WTC11 (cell line): ENCODE measurements at regions of chr3 and their contacts with region 1.

Region 1: DNA sequence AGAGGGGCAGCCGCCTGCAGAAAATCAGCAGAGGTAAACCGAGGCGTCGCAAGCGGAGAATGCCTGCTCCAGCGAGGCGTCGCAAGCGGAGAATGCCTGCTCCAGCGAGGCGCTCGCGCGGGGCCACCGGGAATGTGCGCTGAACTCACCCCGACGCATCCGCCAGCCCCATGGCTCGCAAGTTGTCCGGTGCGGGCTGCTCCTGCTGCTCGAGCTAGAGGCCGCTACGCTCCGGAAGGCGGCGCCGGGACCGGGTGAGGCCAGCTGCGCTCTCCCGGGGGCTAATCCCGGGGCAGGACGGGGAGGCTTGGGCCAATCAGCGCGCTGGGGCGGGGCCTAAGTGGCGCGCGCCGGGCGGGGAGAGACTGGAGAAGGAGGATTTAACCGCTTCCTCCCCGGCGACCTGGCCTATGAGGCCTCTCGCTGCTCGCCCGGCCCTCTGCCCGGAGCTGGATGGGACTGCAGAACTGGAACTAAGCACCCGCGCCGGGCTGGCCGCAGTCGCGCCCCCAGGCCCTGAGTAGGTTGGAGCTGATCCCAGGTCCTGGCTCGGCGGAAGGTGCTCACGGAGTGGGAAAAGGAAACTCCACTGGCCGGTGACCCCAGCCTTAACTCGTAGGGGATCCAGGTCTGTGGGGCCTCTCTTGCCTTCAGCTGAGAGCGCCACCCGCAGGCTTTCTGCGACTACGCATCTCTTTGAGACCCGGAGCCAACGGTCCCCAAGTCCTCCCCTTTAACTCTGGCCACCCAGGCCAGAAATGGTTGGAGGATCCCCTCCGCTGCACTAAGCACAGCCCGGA is at the start of gene SLC26A6:
- DNase-seq: peak; percentile 99
- ATAC-seq: peak; percentile 91
- H3K4me3 Mint-ChIP-seq: peak within 1 kb of the TSS; percentile 84
- H3K27ac Mint-ChIP-seq: peak within 1 kb of the TSS; percentile 94
- H3K4me1 Mint-ChIP-seq: peaks cover 32% of the 10 kb centered on the region
- H3K27me3 Mint-ChIP-seq: no peaks in the 10 kb centered on the region
- CTCF ChIP-seq: peak; percentile 62
- total RNA-seq, gene SLC26A6: 57.2 to 58.9 TPM (median 57.8 TPM) in 3 replicates

Region 2: GRCh38 chr3:48472915-48473616 is 162.4 kb before region 1 on chr3:
- CTCF ChIA-PET with region 1: interaction called, 17 read pairs
- POLR2A ChIA-PET with region 1: interaction called, 4 read pairs
- DNase-seq: peak; percentile 96
- ATAC-seq: peak; percentile 82
- H3K4me3 Mint-ChIP-seq: peak overlapping the region; percentile 91
- H3K27ac Mint-ChIP-seq: peak overlapping the region; percentile 99
- H3K4me1 Mint-ChIP-seq: peaks cover 30% of the 10 kb centered on the region
- H3K27me3 Mint-ChIP-seq: no peaks in the 10 kb centered on the region; the same call in none of the 2 replicates
- CTCF ChIP-seq: peak; percentile 45; the same call in 1 of the 2 replicates

Region 3: GRCh38 chr3:48556793-48557626 is 78.4 kb before region 1 on chr3 and contains the start of gene PFKFB4:
- CTCF ChIA-PET with region 1: interaction called, 39 read pairs
- POLR2A ChIA-PET with region 1: interaction called, 7 read pairs
- DNase-seq: peak; percentile 99
- ATAC-seq: peak; percentile 82
- H3K4me3 Mint-ChIP-seq: peak within 1 kb of the TSS; percentile 86
- H3K27ac Mint-ChIP-seq: peak within 1 kb of the TSS; percentile 95
- H3K4me1 Mint-ChIP-seq: peaks cover 67% of the 10 kb centered on the region
- H3K27me3 Mint-ChIP-seq: no peaks in the 10 kb centered on the region
- CTCF ChIP-seq: no peak
- total RNA-seq, gene PFKFB4: 18.0 to 26.8 TPM (median 26.7 TPM) in 3 replicates

Region 4: DNA sequence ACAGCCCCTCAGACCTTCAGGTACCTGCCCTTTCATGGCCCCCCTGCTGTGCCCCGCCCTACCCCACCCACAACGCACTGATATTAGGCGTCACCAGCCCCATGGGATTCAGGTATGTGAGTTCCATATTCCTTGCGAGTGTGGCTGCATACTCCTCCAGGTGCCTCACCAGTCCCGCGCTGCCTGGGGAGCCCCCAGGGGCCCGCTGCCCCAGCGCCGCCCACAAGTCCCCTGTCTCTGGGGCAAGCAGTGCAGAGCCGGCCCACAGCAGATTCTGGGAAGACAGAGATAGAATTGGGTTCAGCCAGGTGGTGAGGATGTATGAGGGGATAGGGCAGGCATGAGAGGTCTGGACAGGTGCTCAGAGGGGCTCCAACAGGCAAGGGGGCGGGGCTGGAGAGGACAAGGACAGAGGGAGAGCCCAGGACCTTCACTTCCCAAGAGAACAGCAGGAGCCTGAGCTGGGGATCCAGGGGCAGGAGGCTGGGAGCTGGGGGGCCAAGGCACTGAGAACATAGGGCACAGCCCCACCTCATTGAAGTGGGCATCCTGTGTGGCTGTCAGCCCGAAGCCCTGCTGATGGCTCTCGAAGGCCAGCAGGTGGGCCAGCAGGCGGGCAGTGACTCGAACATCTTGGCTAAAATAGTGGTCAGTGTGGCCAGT is 12.9 kb after region 1 on chr3:
- CTCF ChIA-PET with region 1: interaction called, 10 read pairs
- POLR2A ChIA-PET with region 1: no interaction called
- DNase-seq: no peak
- ATAC-seq: no peak
- H3K4me3 Mint-ChIP-seq: no peak overlapping the region
- H3K27ac Mint-ChIP-seq: no peak overlapping the region
- H3K4me1 Mint-ChIP-seq: no peaks in the 10 kb centered on the region
- H3K27me3 Mint-ChIP-seq: no peaks in the 10 kb centered on the region
- CTCF ChIP-seq: no peak

Region 5: DNA sequence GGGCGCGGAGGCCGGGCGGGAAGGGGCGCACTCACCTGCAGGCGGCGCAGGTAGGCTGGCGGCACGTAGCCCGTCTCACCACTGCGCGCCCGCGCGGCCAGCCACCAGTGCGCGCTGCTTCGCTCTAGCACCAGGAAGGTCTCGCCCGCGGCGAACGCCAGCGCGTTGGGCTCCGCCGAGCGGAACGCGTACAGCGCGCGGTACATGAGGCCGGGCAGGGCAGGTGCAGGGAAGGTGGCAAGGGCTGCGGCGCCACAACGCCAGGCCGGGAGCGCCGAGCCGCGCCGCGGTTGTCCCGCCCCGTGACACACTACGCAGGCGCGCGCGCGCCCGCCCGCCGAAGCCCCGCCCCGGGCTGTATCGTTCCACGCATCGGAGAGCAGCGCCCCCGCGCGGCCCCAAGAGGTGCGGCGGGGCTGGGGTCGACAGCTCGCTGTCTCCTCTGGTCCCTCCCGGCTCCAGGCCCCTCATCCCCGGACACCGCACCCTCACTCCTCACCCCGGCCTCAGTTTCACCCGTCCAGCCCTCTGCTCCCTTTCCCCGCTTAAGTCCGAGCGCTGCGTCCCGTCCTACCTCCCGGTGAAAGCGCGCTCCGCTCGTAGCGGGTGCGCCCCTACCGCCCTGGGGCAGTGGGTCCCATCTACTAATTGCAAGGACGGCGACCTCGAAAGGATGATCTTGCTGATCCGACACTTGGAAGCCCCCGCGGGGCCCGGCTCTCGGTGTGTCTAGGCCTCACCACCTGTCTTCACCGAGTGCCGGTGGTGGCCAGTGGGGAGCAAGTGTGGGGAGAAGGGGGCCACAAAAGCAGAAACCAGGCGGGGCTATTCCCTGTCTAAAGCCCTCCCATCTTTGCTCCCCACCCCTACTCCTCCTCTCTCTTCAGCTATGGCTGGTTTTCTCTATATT is 50.4 kb after region 1 on chr3 and contains the start of gene NCKIPSD:
- CTCF ChIA-PET with region 1: interaction called, 23 read pairs
- POLR2A ChIA-PET with region 1: no interaction called
- DNase-seq: peak; percentile 91
- ATAC-seq: peak; percentile 88
- H3K4me3 Mint-ChIP-seq: peak within 1 kb of the TSS; percentile 89
- H3K27ac Mint-ChIP-seq: peak within 1 kb of the TSS; percentile 27
- H3K4me1 Mint-ChIP-seq: peaks cover 16% of the 10 kb centered on the region
- H3K27me3 Mint-ChIP-seq: no peaks in the 10 kb centered on the region
- CTCF ChIP-seq: peak; percentile 82
- total RNA-seq, gene NCKIPSD: 40.1 to 50.1 TPM (median 47.1 TPM) in 3 replicates

Region 6: GRCh38 chr3:48708481-48708889 is 73.1 kb after region 1 on chr3:
- CTCF ChIA-PET with region 1: no interaction called
- POLR2A ChIA-PET with region 1: no interaction called
- DNase-seq: no peak
- ATAC-seq: no peak
- H3K4me3 Mint-ChIP-seq: no peak overlapping the region
- H3K27ac Mint-ChIP-seq: peak overlapping the region; percentile 97
- H3K4me1 Mint-ChIP-seq: peaks cover 45% of the 10 kb centered on the region
- H3K27me3 Mint-ChIP-seq: no peaks in the 10 kb centered on the region
- CTCF ChIP-seq: no peak